AG04450 (cell line): ENCODE measurements at regions of chr10 and their contacts with region 1.

Region 1: DNA sequence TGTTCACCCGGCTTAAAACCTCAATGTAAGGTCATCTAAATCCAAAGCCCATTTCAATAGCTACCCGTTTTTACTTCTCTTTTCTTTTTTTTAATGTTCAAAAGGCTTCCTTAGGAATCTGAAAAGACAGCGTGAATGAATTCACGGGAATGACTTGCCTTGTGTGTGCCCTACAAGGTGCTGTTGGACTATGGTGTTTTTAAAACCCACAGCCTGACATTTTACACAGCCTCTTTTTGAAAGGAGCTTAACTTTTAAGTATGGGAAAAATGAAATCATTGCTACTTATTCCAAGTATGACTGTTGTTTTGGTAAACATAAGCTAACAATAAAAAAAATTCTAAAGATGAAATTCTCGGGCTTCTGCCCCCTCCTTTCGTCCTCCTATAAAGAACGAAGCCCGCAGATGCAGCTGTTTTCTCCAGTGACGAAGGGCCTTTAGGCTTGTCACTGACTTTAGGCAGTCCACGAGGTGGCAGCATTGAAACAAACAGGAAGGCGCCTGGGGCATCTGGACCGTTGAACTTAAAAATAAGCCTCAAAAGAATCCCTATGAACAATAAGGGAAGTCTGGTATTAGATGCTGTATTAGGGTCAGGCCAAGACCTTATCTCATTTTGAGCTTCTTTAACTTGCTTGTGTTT is 141.3 kb downstream of the NRP1 start:
- DNase-seq: peak; percentile 58
- H3K4me3 ChIP-seq: no peak overlapping the region
- H3K27ac ChIP-seq: no peak overlapping the region
- H3K27me3 ChIP-seq: no peaks in the 10 kb centered on the region
- CTCF ChIP-seq: peak; percentile 76

Region 2: GRCh38 chr10:33008499-33009243 is 184.5 kb before region 1 on chr10:
- CTCF ChIA-PET with region 1: interaction called, 11 read pairs
- POLR2A ChIA-PET with region 1: no interaction called
- DNase-seq: peak; percentile 81
- H3K4me3 ChIP-seq: no peak overlapping the region
- H3K27ac ChIP-seq: no peak overlapping the region
- H3K27me3 ChIP-seq: no peaks in the 10 kb centered on the region
- CTCF ChIP-seq: peak; percentile 100

Region 3: GRCh38 chr10:33211106-33211878 is 18.1 kb after region 1 on chr10:
- CTCF ChIA-PET with region 1: interaction called, 18 read pairs
- POLR2A ChIA-PET with region 1: interaction called, 3 read pairs
- DNase-seq: peak; percentile 70
- H3K4me3 ChIP-seq: no peak overlapping the region
- H3K27ac ChIP-seq: peak overlapping the region; percentile 80
- H3K27me3 ChIP-seq: no peaks in the 10 kb centered on the region
- CTCF ChIP-seq: no peak

Region 4: GRCh38 chr10:33311640-33312039 is 118.5 kb after region 1 on chr10:
- CTCF ChIA-PET with region 1: interaction called, 10 read pairs
- POLR2A ChIA-PET with region 1: no interaction called
- DNase-seq: no peak
- H3K4me3 ChIP-seq: no peak overlapping the region
- H3K27ac ChIP-seq: no peak overlapping the region
- H3K27me3 ChIP-seq: no peaks in the 10 kb centered on the region
- CTCF ChIP-seq: no peak

Region 5: DNA sequence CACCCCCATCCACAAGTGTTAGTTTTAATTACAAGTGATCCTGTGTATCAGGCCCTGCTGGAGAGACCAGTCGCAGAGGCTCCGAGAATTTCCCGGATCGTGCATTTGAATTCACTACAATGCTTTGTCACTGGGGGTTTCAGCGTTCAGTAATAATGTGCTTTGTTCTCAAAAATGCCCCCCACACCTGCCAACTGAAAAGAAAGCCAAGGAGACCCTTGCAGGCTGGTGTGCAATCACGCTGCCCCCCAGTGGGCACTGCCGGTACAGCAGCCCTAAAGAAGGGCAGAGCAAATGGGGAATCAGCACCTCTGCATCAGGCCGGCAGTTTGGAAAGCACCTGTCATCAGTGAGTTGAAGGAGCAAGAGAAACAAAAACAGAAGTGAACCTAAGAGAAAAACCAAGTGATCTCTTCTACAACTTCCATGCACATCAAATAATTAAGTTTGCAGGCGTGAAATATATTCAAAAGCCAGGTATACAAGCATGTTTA is 1444.3 kb after region 1 on chr10:
- CTCF ChIA-PET with region 1: interaction called, 13 read pairs
- POLR2A ChIA-PET with region 1: no interaction called
- DNase-seq: no peak
- H3K4me3 ChIP-seq: no peak overlapping the region
- H3K27ac ChIP-seq: no peak overlapping the region
- H3K27me3 ChIP-seq: no peaks in the 10 kb centered on the region
- CTCF ChIP-seq: peak; percentile 99